AG04449 (cell line): ENCODE measurements at regions of chr18 and their contacts with region 1.

Region 1: DNA sequence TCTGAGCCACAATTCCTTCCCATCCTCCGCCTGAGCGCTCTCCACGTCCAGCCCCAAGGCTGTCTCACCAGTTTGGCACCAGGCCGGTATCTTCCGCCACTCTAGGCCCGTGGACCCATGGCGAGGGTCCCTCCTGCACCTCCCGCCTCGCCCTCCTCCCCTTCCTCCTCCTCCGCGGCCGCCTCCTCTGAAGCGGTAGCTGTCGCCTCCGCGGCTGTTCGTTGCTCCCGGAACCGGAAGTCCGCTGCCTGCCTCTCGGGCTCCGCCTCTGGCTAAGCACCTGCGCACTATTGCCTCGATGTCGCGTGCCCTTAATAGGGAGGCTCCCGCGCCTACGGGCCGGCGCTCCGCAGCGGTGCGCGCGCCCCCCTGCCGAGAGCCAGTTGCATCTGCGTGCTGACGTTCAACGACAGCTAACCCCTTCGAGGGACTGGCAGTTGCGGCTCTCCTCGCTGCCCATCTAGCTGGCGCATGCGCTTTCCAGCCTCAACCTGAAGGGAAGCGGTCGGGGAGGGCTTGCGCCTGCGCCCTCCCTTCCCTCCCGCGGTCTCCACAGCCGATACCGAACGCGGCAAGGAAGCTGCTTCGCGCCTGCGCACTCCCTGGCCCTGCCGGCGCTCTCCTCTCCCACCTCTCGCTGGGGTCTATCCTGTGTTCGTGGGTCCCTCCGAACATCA is at the start of gene MBD1:
- DNase-seq: peak; percentile 90
- H3K4me3 ChIP-seq: peak within 1 kb of the TSS; percentile 100
- CTCF ChIP-seq: peak; percentile 35

Region 2: GRCh38 chr18:50247561-50247960 is 33.9 kb before region 1 on chr18:
- CTCF ChIA-PET with region 1: no interaction called
- POLR2A ChIA-PET with region 1: no interaction called
- DNase-seq: no peak
- H3K4me3 ChIP-seq: no peak overlapping the region
- CTCF ChIP-seq: no peak

Region 3: DNA sequence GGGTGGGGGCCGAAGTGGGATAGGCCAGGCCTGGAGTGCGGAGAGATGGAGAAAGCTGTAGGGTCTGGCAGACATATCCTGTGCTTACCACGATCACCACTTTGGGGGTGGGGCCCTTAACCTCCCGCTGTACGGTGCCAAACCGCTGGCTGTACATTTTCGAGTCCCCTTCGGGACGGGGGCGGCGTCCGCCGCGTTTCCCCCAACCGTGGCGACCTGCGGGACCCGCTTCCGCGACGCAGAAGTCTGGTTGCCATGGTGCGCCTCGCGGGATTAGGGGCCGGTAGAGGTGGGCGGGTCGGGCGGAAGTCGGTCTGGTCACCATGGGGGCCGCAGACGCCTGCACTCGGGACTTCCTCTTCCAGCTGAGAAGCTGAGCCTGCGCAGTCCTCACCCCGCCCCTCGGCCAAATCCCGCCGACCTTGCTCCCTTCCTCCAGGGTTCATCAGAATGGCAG is 15.2 kb before region 1 on chr18 and contains the start of gene CFAP53:
- CTCF ChIA-PET with region 1: interaction called, 29 read pairs
- POLR2A ChIA-PET with region 1: interaction called, 12 read pairs
- DNase-seq: peak; percentile 29
- H3K4me3 ChIP-seq: peak within 1 kb of the TSS; percentile 87
- CTCF ChIP-seq: no peak